Common myeloid progenitor, CD34-positive (primary cell): ENCODE measurements at regions of chr2 and their contacts with region 1.

Region 1: GRCh38 chr2:232333361-232334270 is 44.9 kb upstream of the ALPP start:
- DNase-seq: peak in 2 of 3 donors; percentile 37 to 47
- H3K4me3 ChIP-seq: no peak overlapping the region
- H3K27ac ChIP-seq: no peak overlapping the region
- H3K4me1 ChIP-seq: peaks cover 0 to 4% (median 0%) of the 10 kb centered on the region in 4 experiments
- H3K27me3 ChIP-seq: no peaks in the 10 kb centered on the region

Region 2: GRCh38 chr2:232365621-232366321 is 32.2 kb after region 1 on chr2:
- CTCF ChIA-PET with region 1: interaction called, 47 read pairs
- POLR2A ChIA-PET with region 1: no interaction called
- DNase-seq: no peak
- H3K4me3 ChIP-seq: peak overlapping the region in 1 of 7 experiments; percentile 23
- H3K27ac ChIP-seq: no peak overlapping the region
- H3K4me1 ChIP-seq: peaks cover 0 to 59% (median 41%) of the 10 kb centered on the region in 4 experiments
- H3K27me3 ChIP-seq: no peaks in the 10 kb centered on the region

Region 3: GRCh38 chr2:232432598-232433184 is 99.1 kb after region 1 on chr2:
- CTCF ChIA-PET with region 1: interaction called, 14 read pairs
- POLR2A ChIA-PET with region 1: no interaction called
- DNase-seq: peak in 1 of 3 donors; percentile 28
- H3K4me3 ChIP-seq: no peak overlapping the region
- H3K27ac ChIP-seq: no peak overlapping the region
- H3K4me1 ChIP-seq: peaks cover 0 to 30% (median 19%) of the 10 kb centered on the region in 4 experiments
- H3K27me3 ChIP-seq: no peaks in the 10 kb centered on the region

Region 4: DNA sequence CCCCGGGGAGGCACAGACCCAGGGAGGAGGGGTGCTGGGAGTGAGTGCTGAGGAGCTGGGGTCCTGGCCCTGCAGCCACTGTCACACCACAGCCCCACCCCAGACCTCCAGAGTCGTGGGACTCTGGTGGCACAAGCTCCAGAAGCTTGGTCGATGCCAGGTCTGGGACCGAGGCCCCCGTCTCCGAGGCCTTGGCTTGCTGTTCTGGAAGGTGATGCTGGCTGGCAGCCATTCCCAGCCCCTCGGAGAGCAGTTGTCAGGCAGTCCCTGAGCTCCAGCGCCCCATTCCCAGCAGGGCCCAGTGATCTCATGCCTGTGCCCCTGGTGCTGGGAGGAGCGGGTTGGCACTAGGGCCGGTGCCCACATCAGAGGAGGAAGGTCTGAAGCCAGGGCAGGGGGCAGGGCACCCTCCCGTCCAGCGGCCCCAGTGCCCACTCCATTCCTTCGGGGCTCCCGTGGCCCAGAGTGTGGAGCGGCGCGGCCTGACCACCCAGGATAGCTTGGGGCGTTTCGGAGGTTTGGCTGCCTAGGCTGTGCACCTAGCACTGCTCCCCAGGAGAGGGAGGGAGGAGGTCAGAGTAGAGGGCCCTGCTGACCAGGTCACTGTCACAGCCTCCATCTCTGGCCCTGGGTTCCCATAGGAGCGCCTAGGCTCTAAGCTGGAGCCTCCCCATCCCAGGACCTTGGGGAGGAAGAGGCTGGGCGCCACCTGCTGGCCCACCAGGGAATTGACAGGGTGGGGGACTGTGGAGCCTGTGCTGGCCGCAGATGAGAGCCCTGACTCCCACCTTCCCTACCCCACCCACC is 105.5 kb after region 1 on chr2:
- CTCF ChIA-PET with region 1: interaction called, 14 read pairs
- POLR2A ChIA-PET with region 1: no interaction called
- DNase-seq: peak in 2 of 3 donors; percentile 20 to 27
- H3K4me3 ChIP-seq: no peak overlapping the region
- H3K27ac ChIP-seq: no peak overlapping the region
- H3K4me1 ChIP-seq: peaks cover 0 to 10% (median 3%) of the 10 kb centered on the region in 4 experiments
- H3K27me3 ChIP-seq: no peaks in the 10 kb centered on the region

Region 5: DNA sequence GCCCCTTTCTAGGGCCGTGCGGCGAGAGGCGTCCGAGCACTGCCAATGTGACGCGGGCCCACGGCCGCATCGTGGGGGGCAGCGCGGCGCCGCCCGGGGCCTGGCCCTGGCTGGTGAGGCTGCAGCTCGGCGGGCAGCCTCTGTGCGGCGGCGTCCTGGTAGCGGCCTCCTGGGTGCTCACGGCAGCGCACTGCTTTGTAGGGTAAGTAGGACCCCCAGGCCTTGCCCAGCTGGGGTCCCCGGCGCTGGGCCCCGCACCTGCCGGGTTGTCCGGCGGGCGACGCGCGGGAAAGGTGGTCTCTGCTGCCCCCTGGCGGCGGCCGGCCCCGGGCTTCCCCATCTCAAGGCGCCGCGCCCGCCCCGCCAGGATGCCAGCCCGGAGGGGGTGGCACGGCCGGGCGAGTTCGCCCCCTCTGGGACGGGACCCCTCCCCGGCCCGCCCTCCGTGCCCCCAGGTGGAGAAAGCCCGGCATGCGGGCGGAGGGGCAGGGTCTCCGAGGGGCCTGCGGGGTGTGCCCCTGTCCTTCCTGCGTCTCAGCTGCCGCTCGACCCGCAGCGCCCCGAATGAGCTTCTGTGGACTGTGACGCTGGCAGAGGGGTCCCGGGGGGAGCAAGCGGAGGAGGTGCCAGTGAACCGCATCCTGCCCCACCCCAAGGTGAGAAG is 188.5 kb after region 1 on chr2:
- CTCF ChIA-PET with region 1: no interaction called
- POLR2A ChIA-PET with region 1: no interaction called
- DNase-seq: peak in 2 of 3 donors; percentile 54 to 56
- H3K4me3 ChIP-seq: peak overlapping the region in 5 of 7 experiments; percentile 10 to 54 (median 22)
- H3K27ac ChIP-seq: no peak overlapping the region
- H3K4me1 ChIP-seq: peaks cover 0 to 30% (median 18%) of the 10 kb centered on the region in 4 experiments
- H3K27me3 ChIP-seq: peaks cover 0 to 71% (median 16%) of the 10 kb centered on the region in 5 experiments